ENCODE measurements at regions of chr7 and their contacts with region 1.

Region 1: GRCh38 chr7:116929914-116930913 is 23.1 kb upstream of the ST7 start:
- DNase-seq: peak; percentile 85
- H3K4me3 ChIP-seq: no peak overlapping the region
- H3K4me3 Mint-ChIP-seq: no peak overlapping the region
- H3K27ac Mint-ChIP-seq: no peak overlapping the region
- H3K4me1 ChIP-seq: peaks cover 3% of the 10 kb centered on the region; the same call in 1 of the 2 replicates
- H3K4me1 Mint-ChIP-seq: peaks cover 12% of the 10 kb centered on the region
- H3K27me3 ChIP-seq: no peaks in the 10 kb centered on the region
- H3K27me3 Mint-ChIP-seq: no peaks in the 10 kb centered on the region
- CTCF ChIP-seq: peak; percentile 87

Region 2: GRCh38 chr7:116953727-116954442 is 23.7 kb after region 1 on chr7:
- CTCF ChIA-PET with region 1: interaction called, 3 read pairs
- POLR2A ChIA-PET with region 1: no interaction called
- intact Hi-C with region 1: loop called (anchors 1 kb)
- DNase-seq: peak; percentile 81 to 87
- H3K4me3 ChIP-seq: peak overlapping the region; percentile 91
- H3K4me3 Mint-ChIP-seq: peak overlapping the region; percentile 94
- H3K27ac Mint-ChIP-seq: peak overlapping the region; percentile 94
- H3K4me1 ChIP-seq: peaks cover 12% of the 10 kb centered on the region
- H3K4me1 Mint-ChIP-seq: peaks cover 18% of the 10 kb centered on the region
- H3K27me3 ChIP-seq: no peaks in the 10 kb centered on the region
- H3K27me3 Mint-ChIP-seq: no peaks in the 10 kb centered on the region
- CTCF ChIP-seq: no peak

Region 3: DNA sequence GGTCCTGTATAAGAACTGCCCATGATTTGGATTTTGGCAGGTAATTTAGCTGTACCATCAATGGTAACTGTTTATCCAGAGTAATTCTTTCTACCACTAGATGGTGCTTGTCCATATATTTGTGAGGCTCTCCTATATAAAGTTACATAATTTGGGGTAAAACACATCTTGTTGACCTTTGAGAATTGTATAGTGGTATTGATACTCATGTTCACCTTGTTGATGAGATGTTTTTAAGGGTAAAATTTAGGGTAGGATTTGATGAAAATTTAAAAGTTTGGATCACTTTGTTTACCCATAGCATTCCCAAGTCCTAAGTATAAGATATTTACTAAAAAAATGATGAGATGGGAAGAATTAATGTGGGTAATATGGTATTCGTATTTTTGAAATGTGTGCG is 54.7 kb after region 1 on chr7:
- CTCF ChIA-PET with region 1: interaction called, 3 read pairs
- POLR2A ChIA-PET with region 1: no interaction called
- intact Hi-C with region 1: loop called (anchors 1 kb)
- DNase-seq: peak in 1 of 2 experiments; percentile 21
- H3K4me3 ChIP-seq: no peak overlapping the region
- H3K4me3 Mint-ChIP-seq: no peak overlapping the region
- H3K27ac Mint-ChIP-seq: no peak overlapping the region
- H3K4me1 ChIP-seq: peaks cover 3% of the 10 kb centered on the region; the same call in 1 of the 2 replicates
- H3K4me1 Mint-ChIP-seq: no peaks in the 10 kb centered on the region
- H3K27me3 ChIP-seq: no peaks in the 10 kb centered on the region
- H3K27me3 Mint-ChIP-seq: no peaks in the 10 kb centered on the region
- CTCF ChIP-seq: peak; percentile 57 to 60

Region 4: GRCh38 chr7:117014673-117015133 is 84.5 kb after region 1 on chr7:
- CTCF ChIA-PET with region 1: no interaction called
- POLR2A ChIA-PET with region 1: no interaction called
- intact Hi-C with region 1: loop called (anchors 1 kb)
- DNase-seq: no peak
- H3K4me3 ChIP-seq: no peak overlapping the region
- H3K4me3 Mint-ChIP-seq: no peak overlapping the region
- H3K27ac Mint-ChIP-seq: no peak overlapping the region
- H3K4me1 ChIP-seq: no peaks in the 10 kb centered on the region; the same call in 1 of the 2 replicates
- H3K4me1 Mint-ChIP-seq: peaks cover 14% of the 10 kb centered on the region
- H3K27me3 ChIP-seq: no peaks in the 10 kb centered on the region
- H3K27me3 Mint-ChIP-seq: no peaks in the 10 kb centered on the region
- CTCF ChIP-seq: no peak

Region 5: GRCh38 chr7:117119192-117119924 is 189.1 kb after region 1 on chr7:
- CTCF ChIA-PET with region 1: no interaction called
- POLR2A ChIA-PET with region 1: no interaction called
- intact Hi-C with region 1: loop called (anchors 1 kb)
- DNase-seq: peak; percentile 70 to 85
- H3K4me3 ChIP-seq: no peak overlapping the region
- H3K4me3 Mint-ChIP-seq: no peak overlapping the region
- H3K27ac Mint-ChIP-seq: no peak overlapping the region
- H3K4me1 ChIP-seq: no peaks in the 10 kb centered on the region
- H3K4me1 Mint-ChIP-seq: no peaks in the 10 kb centered on the region
- H3K27me3 ChIP-seq: no peaks in the 10 kb centered on the region
- H3K27me3 Mint-ChIP-seq: no peaks in the 10 kb centered on the region
- CTCF ChIP-seq: peak; percentile 80 to 85

Region 6: DNA sequence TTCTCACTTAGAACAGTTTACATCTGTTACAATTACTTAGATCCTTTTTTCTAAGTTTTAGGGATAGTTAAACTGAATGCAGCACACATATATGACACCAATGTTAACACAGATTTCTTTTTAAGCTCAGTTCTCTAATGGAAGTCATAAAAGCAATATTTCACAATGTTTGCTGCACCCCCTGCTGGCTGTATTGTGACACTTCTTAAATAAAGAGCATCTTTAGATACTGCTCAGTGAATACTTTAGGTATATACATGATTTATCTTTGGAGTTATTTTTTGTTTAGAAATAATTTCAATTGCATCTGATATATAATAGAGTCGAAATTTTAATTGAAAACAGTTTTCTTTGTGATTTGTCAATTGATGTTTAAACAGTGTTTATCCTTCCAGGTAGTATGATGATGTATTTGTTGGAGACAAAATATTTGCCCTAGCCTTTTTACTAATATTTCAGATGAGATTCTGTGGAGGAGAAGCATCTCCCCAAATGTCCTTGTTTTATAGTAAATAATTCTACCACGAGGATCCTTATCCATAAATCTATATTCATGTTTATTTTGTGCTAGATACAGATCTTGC is 197.5 kb after region 1 on chr7:
- CTCF ChIA-PET with region 1: interaction called, 29 read pairs
- POLR2A ChIA-PET with region 1: no interaction called
- intact Hi-C with region 1: loop called (anchors 1 kb)
- DNase-seq: peak in 1 of 2 experiments; percentile 49
- H3K4me3 ChIP-seq: no peak overlapping the region
- H3K4me3 Mint-ChIP-seq: no peak overlapping the region
- H3K27ac Mint-ChIP-seq: no peak overlapping the region
- H3K4me1 ChIP-seq: no peaks in the 10 kb centered on the region
- H3K4me1 Mint-ChIP-seq: no peaks in the 10 kb centered on the region
- H3K27me3 ChIP-seq: no peaks in the 10 kb centered on the region
- H3K27me3 Mint-ChIP-seq: no peaks in the 10 kb centered on the region
- CTCF ChIP-seq: peak; percentile 82

Region 7: DNA sequence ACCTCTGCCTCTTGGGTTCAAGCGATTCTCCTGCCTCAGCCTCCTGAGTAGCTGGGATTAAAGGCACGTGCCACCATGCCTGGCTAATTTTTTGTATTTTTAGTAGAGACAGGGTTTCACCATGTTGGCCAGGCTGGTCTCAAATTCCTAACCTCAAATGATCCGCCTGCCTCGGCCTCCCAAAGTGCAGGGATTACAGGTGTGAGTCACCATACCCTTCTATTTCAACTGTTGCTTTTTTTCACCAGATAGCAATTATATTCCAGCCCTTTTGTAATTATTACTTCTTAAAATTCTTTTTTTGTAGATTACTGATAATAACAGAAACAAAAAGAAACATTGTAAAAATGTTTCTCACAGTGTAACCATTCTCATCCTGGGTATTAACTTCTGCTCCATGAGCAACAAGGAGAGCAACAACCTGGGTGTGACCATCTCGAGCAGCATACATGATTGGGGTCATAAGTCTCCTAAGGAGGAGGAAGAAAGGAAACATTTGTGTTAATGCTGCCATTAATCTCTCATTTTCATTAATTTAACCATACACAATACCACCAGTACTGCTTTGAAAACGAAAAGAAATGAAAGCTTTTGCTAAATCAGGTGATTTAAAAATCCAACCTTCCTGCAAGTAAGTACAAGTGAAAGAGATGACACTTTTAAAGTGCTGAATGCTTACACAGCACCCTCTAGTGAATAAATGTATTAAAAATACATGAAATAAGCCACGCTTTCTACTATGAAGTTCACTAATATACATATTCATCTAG is 455.3 kb after region 1 on chr7:
- CTCF ChIA-PET with region 1: no interaction called
- POLR2A ChIA-PET with region 1: no interaction called
- intact Hi-C with region 1: loop called (anchors 1 kb)
- DNase-seq: no peak
- H3K4me3 ChIP-seq: no peak overlapping the region
- H3K4me3 Mint-ChIP-seq: no peak overlapping the region
- H3K27ac Mint-ChIP-seq: no peak overlapping the region
- H3K4me1 ChIP-seq: no peaks in the 10 kb centered on the region
- H3K4me1 Mint-ChIP-seq: no peaks in the 10 kb centered on the region
- H3K27me3 ChIP-seq: no peaks in the 10 kb centered on the region
- H3K27me3 Mint-ChIP-seq: no peaks in the 10 kb centered on the region
- CTCF ChIP-seq: peak; percentile 29 to 45

Measured in Caco-2 (cell line).